ENCODE measurements at regions of chr10 and their contacts with region 1.

Region 1: DNA sequence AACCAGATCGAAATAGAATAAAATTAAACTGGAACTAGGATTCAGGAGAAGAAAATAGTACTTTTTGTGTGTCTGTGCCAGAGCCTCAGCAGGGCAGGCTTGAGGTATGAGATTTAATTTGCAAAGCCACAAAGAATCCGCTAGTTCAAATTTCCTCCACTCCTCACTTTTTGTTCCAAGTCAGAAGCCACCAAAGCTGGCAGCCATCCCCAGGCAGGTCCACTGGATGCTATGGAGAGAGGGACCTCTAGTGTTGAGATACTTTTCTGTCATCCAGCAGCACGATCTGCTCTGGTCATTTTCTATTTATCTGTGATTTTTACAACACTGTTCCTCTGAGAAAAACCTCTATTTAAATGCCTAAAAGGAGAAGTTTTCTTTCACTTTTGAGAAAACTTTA is 147.9 kb upstream of the FRMD4A start:
- DNase-seq: peak; percentile 87
- H3K4me3 ChIP-seq: no peak overlapping the region
- H3K27ac ChIP-seq: no peak overlapping the region
- H3K4me1 ChIP-seq: peaks cover 4% of the 10 kb centered on the region
- H3K27me3 ChIP-seq: no peaks in the 10 kb centered on the region
- CTCF ChIP-seq: peak; percentile 83

Region 2: DNA sequence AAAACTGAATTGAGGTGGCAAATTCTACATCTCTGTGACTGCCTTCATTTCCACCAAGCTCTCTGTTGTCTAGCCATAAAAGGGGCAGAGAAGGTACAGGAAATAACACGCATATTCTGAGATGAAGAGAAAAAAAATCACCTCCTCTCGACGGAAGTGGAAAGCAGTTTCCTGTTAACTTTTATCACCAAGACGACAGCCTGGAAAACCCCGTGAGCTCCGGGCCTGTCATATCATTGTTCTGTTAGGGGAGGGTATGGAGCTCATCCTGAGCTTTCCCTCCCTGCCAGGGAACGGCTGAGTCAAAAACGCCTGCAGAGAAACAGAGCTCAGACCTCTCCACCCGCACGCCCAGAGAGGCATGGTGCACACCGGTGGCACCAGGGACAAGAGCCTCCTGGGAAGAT is 691.6 kb before region 1 on chr10:
- CTCF ChIA-PET with region 1: interaction called, 3 read pairs
- POLR2A ChIA-PET with region 1: no interaction called
- intact Hi-C with region 1: loop called (anchors 5 kb)
- DNase-seq: peak; percentile 56
- H3K4me3 ChIP-seq: no peak overlapping the region
- H3K27ac ChIP-seq: no peak overlapping the region
- H3K4me1 ChIP-seq: peaks cover 7% of the 10 kb centered on the region
- H3K27me3 ChIP-seq: no peaks in the 10 kb centered on the region
- CTCF ChIP-seq: no peak

Region 3: DNA sequence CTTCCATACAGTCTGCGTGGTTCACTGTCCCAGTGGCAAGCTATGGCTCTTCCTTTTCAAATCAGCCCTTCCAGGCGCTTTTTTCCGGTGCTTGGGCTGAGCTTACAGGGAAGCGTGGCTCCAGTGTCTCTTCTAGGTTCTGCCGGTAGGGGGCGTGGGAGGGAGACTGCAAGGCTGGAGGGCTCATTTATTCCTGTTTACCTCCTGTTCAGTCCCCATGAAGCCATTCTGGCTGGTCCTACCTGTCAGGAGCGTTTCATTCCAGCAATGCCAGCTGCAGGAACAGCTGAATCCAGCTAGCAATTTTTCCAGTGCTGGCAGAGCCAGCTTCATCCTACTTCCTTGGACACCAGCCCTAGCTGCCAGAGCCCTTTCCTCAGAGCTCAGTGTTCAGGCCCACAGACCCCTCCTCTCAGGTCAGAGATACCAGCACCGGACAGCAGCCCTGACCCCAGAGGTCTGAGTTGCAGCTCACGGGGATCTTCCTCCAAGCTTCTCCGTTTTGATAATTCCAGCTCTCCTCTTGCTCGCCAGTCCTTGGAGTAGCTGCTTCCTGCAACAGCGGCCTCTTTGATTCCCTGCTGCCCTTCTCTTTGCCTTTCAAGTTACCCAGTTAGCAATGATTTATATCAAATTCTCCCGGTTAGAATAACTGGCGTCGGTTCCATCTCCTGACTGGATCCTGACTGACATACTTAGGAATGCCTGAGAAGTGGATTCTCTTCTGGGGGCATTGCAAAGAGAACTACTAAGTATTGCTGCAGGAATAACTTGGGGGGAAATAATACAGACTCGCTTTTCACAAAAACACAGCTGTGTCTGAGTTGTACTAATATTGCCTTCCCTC is 277.7 kb before region 1 on chr10:
- CTCF ChIA-PET with region 1: interaction called, 17 read pairs
- POLR2A ChIA-PET with region 1: no interaction called
- intact Hi-C with region 1: loop called (anchors 1 kb)
- DNase-seq: peak; percentile 27
- H3K4me3 ChIP-seq: no peak overlapping the region
- H3K27ac ChIP-seq: no peak overlapping the region
- H3K4me1 ChIP-seq: no peaks in the 10 kb centered on the region
- H3K27me3 ChIP-seq: no peaks in the 10 kb centered on the region
- CTCF ChIP-seq: peak; percentile 55

Region 4: DNA sequence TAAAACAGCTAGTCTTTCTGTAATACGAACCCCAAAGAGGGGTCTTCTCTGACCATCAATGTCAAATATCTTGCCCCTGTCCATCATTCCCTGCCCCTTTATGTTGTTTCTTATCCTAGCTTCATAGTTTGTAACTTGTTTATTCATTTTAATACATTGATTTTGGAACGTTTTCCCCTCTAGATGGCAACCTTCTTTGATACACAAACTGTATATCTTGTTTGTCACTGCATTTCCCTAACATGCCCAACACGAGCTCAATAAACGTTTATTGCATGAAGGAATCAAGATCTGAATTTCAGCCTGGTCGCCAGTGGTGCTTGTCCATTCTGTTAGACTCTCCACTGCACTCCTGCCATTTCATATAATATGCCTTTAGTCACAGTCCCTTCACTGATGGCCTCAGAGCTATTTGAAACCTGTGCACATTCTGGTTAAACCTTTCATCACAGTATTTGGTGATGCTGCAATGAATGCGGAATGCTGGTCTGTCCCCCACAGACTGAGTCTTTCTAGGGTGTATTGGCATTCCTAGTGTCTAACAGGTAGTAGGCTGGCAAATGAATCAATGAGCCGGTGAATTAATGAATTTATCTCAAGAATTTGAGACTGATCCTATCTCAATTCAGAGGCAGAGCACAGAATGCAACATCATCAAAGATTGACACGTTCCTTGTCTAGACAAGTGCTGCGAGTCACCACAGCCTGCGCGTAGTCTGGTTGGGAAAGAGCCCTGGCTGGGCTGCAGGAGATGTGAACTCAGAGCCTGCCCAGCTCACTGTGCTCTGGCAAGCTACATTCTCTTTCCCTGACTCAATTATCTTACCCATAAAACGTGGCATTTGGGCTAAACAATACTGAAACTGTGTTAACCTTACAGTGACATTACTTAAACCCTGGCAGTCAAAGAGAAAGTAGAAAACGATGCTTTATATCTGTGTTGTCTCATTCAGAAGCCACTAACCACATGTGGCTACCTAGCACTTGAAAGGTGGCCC is 92.7 kb before region 1 on chr10:
- CTCF ChIA-PET with region 1: interaction called, 5 read pairs
- POLR2A ChIA-PET with region 1: no interaction called
- intact Hi-C with region 1: loop called (anchors 2 kb)
- DNase-seq: peak; percentile 25
- H3K4me3 ChIP-seq: no peak overlapping the region
- H3K27ac ChIP-seq: no peak overlapping the region
- H3K4me1 ChIP-seq: peaks cover 3% of the 10 kb centered on the region
- H3K27me3 ChIP-seq: peaks cover 28% of the 10 kb centered on the region
- CTCF ChIP-seq: peak; percentile 49

Region 5: DNA sequence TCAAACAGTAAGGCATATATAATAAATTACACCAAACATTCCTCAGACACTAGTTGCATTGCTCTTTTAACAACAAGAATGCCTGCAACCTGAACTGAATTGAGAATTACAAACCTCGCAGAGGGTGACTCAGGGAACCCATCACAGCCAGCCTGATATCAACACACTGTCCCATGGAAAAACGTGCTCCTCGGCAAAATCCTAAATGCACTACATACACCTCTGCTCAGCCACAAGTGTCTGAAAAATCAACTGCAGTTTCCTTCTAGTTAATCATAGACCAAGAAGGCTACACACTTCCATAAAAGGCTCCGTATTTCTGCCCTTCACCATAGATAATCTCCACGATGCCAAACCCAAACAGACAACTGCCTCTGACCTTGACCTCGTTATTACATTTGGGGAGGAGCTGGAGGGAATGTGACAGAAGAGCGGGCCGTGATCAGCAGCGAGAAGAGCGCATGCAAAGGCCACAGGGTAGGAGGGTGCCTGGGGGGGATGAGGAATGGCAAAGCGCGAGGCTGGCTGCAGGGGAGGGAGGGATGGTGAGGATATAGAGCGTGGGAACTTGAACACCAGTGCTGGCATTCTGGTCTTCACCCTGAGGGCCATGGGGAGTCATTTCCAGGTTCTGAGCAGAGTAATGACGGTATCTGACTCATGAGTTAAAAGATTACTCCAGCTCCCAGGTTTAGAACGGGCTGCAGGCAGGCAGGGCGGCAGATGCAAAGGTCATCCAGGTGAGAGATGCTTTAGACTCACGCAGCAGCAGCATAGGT is 54.1 kb after region 1 on chr10:
- CTCF ChIA-PET with region 1: no interaction called
- POLR2A ChIA-PET with region 1: no interaction called
- intact Hi-C with region 1: no loop called
- DNase-seq: no peak
- H3K4me3 ChIP-seq: no peak overlapping the region
- H3K27ac ChIP-seq: no peak overlapping the region
- H3K4me1 ChIP-seq: no peaks in the 10 kb centered on the region
- H3K27me3 ChIP-seq: no peaks in the 10 kb centered on the region
- CTCF ChIP-seq: no peak

Region 6: GRCh38 chr10:14556285-14556956 is 77.8 kb after region 1 on chr10:
- CTCF ChIA-PET with region 1: no interaction called
- POLR2A ChIA-PET with region 1: no interaction called
- intact Hi-C with region 1: no loop called
- DNase-seq: no peak
- H3K4me3 ChIP-seq: no peak overlapping the region
- H3K27ac ChIP-seq: no peak overlapping the region
- H3K4me1 ChIP-seq: peaks cover 20% of the 10 kb centered on the region
- H3K27me3 ChIP-seq: no peaks in the 10 kb centered on the region
- CTCF ChIP-seq: no peak